Testis (tissue), 5 donors: ENCODE measurements at regions of chr21 and their contacts with region 1.

Region 1: GRCh38 chr21:42120087-42120821 is 49.1 kb downstream of the UMODL1 start:
- DNase-seq: no peak
- H3K4me3 ChIP-seq: no peak overlapping the region
- H3K27ac ChIP-seq: no peak overlapping the region
- H3K4me1 ChIP-seq: no peaks in the 10 kb centered on the region
- H3K27me3 ChIP-seq: no peaks in the 10 kb centered on the region
- CTCF ChIP-seq: no peak
- POLR2A ChIP-seq: no peak

Region 2: GRCh38 chr21:41816220-41817165 is 303.8 kb before region 1 on chr21:
- intact Hi-C with region 1: loop called (anchors 5 kb)
- DNase-seq: peak; percentile 67
- H3K4me3 ChIP-seq: no peak overlapping the region
- H3K27ac ChIP-seq: no peak overlapping the region
- H3K4me1 ChIP-seq: no peaks in the 10 kb centered on the region
- H3K27me3 ChIP-seq: no peaks in the 10 kb centered on the region
- CTCF ChIP-seq: peak; percentile 56 to 76 (median 72)
- POLR2A ChIP-seq: no peak